CD8-positive, alpha-beta T cell (primary cell): ENCODE measurements at regions of chr7 and their contacts with region 1.

Region 1: DNA sequence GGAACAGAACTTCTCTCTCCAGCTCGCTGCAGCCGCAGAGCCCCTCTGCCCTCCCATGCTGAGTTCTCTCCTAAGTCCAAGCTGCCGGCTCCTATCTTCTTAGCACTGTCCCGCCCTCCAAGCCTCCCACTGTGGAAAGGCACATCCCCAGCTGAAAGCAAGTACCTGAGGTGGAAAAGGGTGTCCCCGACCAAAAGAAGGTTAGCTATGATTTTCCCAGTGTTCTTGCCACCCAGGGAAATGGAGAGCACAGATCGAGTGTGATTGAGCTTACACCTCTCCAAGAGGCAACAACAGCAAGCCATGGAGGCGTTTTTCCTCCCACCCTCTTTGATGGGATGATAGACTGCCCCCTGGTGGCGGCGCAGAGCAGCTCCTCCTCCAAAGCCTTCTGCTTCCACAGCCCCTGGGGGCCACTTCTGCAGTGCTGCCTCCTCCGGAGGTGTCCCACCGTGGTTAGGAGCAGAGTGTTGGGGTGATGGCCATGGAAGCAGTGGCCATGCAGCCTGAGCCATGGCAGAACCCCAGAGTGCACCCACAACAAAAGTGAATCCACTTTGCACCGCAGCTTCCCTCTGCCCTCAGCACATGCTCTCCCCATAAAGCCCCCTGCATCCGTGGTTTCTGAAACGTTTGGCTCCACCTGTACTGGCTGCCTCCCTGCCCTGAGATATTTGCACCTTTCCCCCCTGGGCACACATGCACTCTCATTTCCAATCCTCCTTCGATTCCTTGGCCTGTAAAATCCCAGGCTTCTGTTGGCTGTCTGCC is 143.1 kb upstream of the STK17A start:
- DNase-seq: peak in 8 of 9 experiments; percentile 12 to 68 (median 54)
- ATAC-seq: peak; percentile 36
- H3K4me3 ChIP-seq: no peak overlapping the region
- H3K4me3 Mint-ChIP-seq: no peak overlapping the region
- H3K27ac ChIP-seq: no peak overlapping the region
- H3K27ac Mint-ChIP-seq: no peak overlapping the region
- H3K4me1 ChIP-seq: no peaks in the 10 kb centered on the region
- H3K4me1 Mint-ChIP-seq: no peaks in the 10 kb centered on the region
- H3K27me3 ChIP-seq: no peaks in the 10 kb centered on the region
- H3K27me3 Mint-ChIP-seq: peaks cover 14% of the 10 kb centered on the region
- CTCF ChIP-seq: peak; percentile 63

Region 2: DNA sequence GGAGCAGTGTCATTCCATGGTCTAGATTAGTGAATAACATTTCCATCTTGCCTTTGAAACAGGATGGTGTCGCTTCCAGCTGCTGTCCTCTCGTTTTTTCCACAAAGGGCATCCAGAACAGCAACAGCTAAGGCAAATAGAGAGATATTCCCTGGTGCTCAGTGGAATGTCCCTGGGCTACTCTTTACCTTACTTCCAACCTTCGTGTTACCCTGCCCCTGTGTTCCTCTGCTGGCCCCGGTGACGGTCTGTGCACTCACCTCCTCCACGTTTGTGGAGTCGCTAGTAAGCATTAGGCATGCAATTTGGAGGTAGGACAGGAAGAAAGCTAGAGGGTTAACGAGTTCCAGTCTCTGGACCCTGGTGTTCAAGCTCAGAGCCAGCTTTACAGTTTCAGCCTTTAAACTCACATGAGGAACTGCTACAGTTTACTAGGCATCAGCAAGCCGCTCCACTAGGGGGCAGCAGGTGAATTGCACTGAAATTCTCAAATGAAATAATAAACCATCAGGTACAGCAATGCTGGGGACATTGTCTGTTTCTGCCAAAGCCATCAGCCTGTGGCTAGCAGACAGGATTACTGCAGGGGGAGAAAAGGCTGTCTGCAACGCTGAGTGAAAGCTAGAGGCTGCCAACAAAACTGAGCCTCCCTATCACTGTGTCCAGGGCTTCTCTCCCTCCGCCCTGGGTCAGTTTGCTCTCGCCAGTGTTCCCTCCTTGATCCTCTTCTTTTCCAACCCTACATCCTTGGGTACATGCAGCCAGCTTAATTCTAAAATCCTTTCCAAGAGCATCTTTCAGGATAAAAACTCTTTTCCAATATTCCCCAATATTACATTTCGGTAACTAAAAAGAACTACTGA is 498.6 kb before region 1 on chr7:
- CTCF ChIA-PET with region 1: no interaction called
- POLR2A ChIA-PET with region 1: no interaction called
- intact Hi-C with region 1: loop called in 1 of 2 experiments (anchors 5 kb)
- DNase-seq: peak; percentile 53 to 80 (median 71)
- ATAC-seq: peak; percentile 80
- H3K4me3 ChIP-seq: no peak overlapping the region
- H3K4me3 Mint-ChIP-seq: no peak overlapping the region
- H3K27ac ChIP-seq: no peak overlapping the region
- H3K27ac Mint-ChIP-seq: no peak overlapping the region
- H3K4me1 ChIP-seq: no peaks in the 10 kb centered on the region
- H3K4me1 Mint-ChIP-seq: peaks cover under 1% of the 10 kb centered on the region
- H3K27me3 ChIP-seq: no peaks in the 10 kb centered on the region
- H3K27me3 Mint-ChIP-seq: no peaks in the 10 kb centered on the region
- CTCF ChIP-seq: peak; percentile 90

Region 3: GRCh38 chr7:43454936-43455518 is 15.2 kb after region 1 on chr7:
- CTCF ChIA-PET with region 1: interaction called, 15 read pairs
- POLR2A ChIA-PET with region 1: no interaction called
- intact Hi-C with region 1: no loop called
- DNase-seq: peak in 2 of 9 experiments; percentile 15 to 36
- ATAC-seq: no peak
- H3K4me3 ChIP-seq: no peak overlapping the region
- H3K4me3 Mint-ChIP-seq: no peak overlapping the region
- H3K27ac ChIP-seq: no peak overlapping the region
- H3K27ac Mint-ChIP-seq: no peak overlapping the region
- H3K4me1 ChIP-seq: no peaks in the 10 kb centered on the region
- H3K4me1 Mint-ChIP-seq: peaks cover 5% of the 10 kb centered on the region
- H3K27me3 ChIP-seq: no peaks in the 10 kb centered on the region
- H3K27me3 Mint-ChIP-seq: peaks cover 4% of the 10 kb centered on the region
- CTCF ChIP-seq: peak; percentile 32

Region 4: DNA sequence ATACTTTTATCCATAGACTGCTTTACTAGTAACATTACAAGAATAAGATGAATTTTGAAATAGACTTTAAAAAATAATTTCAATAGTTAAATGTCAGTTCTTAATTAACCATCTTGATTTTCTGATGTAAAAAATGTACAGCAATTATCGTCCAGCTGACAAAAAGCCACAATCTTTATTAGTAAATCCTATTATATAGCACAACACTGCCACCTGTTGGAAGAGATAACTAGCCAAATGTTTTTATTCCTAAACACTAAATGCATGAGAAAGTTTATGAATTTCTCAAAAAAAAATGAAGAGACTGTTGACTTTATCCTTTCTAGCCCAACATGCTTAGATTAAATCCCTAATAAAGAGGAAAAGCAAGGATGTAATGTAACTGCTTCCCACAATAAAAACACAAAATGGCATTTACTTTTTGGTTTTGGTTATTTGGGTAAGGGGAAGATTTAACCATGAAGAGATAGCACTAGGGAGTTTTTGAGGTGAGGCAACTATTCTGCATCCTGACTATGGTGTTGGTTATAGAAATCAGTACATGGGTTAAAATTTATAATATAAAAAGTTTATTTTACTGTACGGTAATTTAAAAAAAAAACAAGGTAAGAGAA is 281.5 kb after region 1 on chr7:
- CTCF ChIA-PET with region 1: no interaction called
- POLR2A ChIA-PET with region 1: no interaction called
- intact Hi-C with region 1: loop called in 1 of 2 experiments (anchors 5 kb)
- DNase-seq: peak in 3 of 9 experiments; percentile 22 to 76 (median 69)
- ATAC-seq: peak; percentile 31
- H3K4me3 ChIP-seq: no peak overlapping the region
- H3K4me3 Mint-ChIP-seq: no peak overlapping the region
- H3K27ac ChIP-seq: no peak overlapping the region
- H3K27ac Mint-ChIP-seq: no peak overlapping the region
- H3K4me1 ChIP-seq: no peaks in the 10 kb centered on the region
- H3K4me1 Mint-ChIP-seq: peaks cover 54% of the 10 kb centered on the region
- H3K27me3 ChIP-seq: no peaks in the 10 kb centered on the region
- H3K27me3 Mint-ChIP-seq: no peaks in the 10 kb centered on the region
- CTCF ChIP-seq: peak; percentile 95